ENCODE measurements at regions of chr7 and their contacts with region 1.

Region 1: DNA sequence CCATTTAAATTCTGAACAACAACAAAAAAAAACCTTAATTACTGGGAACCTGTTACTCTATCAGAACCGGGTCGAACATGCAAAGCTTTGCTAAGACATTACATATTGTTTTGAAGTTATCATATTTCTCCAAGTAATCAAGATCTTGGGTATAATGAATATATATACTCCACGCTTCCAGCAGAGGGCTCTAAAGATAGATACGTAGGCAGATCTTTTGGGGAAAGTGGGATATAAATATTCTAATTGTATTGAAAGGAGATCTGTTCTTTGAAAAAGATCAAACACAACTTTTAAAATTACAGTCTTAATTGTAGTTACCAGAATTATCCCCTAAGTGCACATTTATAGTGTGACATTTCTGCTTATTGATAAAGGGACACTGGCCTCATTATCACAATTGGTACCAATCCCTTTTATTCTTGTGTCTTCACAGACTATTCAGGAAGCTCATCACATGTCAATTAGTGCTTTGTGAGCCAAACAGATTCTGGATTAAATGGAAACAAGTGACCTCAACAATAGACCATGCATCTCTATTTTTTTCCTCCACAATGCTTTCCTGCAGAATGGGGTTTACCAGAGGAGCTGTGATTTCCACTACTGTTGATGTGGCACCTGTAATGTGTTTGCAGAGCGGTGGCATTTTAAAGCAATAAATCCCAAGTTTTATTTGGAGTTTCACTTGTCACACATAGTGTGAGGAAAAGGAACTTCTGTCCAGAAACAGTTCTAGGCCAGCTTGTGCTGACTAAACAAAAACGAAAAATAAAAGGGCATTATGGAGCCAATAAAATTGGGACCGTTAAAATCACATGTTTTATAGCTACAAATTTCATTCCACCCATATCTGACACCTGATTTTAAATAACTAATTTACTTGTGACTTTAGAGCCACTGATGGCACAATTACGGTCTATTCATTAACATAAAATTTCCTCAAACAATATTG is 122.4 kb downstream of the CTTNBP2 start:
- DNase-seq: no peak
- ATAC-seq: no peak
- H3K4me3 ChIP-seq: no peak overlapping the region
- H3K27ac ChIP-seq: no peak overlapping the region
- H3K4me1 ChIP-seq: no peaks in the 10 kb centered on the region
- H3K27me3 ChIP-seq: no peaks in the 10 kb centered on the region

Region 2: DNA sequence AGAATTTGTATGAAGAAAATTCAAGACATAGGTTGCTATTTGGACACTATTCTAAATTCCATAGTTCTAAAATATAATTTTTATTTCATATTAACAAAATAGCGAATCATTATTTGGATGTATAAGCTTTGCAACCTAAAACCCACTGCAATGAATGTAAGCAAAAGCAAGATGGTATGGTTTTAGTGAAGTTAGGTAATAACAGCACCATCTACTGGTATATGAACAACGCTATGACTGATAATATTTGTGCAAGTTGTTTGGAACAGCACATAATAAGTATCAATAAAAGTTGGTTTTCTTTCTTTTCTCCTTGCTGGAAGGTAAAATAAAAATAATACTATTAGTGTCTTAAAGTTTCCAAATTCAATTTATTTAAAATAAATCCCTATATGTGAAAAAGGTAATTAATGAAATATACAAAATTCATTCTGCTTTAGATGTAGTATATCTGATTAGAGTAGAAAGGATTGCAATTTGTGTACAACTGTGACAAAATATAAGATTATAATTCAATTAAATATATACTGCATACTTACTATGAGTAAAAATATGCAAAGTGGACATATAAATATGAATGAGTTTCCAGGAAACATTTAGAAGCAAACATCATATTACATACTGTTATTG is 354.0 kb after region 1 on chr7:
- intact Hi-C with region 1: loop called in 3 of 4 experiments (anchors 2 to 10 kb)
- DNase-seq: no peak
- ATAC-seq: no peak
- H3K4me3 ChIP-seq: no peak overlapping the region
- H3K27ac ChIP-seq: no peak overlapping the region
- H3K4me1 ChIP-seq: no peaks in the 10 kb centered on the region
- H3K27me3 ChIP-seq: no peaks in the 10 kb centered on the region